Gastrocnemius medialis (tissue), 4 donors: ENCODE measurements at regions of chr10 and their contacts with region 1.

Region 1: GRCh38 chr10:77144656-77145055 is 493.0 kb downstream of the KCNMA1 start:
- DNase-seq: no peak
- ATAC-seq: no peak
- H3K4me3 ChIP-seq: no peak overlapping the region
- H3K27ac ChIP-seq: no peak overlapping the region
- H3K4me1 ChIP-seq: peaks cover 11 to 14% of the 10 kb centered on the region in 2 donors
- H3K27me3 ChIP-seq: no peaks in the 10 kb centered on the region
- CTCF ChIP-seq: no peak
- POLR2A ChIP-seq: no peak

Region 2: DNA sequence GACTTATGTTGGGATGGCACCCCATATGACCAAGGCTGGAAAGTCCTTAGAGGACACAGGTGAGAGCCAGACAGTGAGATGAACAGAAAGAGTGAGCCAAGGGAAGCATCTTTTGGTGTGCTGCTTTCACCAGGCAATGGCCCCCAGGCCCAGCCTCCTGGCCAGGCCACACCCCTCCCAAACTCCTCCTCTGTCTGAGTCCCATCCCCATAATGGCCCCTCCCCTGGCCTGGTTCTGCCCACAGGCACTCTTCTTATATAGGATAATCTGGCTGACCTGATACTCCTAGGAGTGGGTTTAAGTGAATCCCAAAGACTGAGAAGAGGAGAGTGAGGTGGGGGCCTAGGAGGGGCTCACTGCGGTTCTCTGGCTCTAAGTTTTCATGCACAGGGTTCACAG is 1141.5 kb after region 1 on chr10:
- in situ Hi-C with region 1: no loop called
- intact Hi-C with region 1: loop called (anchors 5 kb)
- DNase-seq: no peak
- ATAC-seq: no peak
- H3K4me3 ChIP-seq: no peak overlapping the region
- H3K27ac ChIP-seq: no peak overlapping the region
- H3K4me1 ChIP-seq: no peaks in the 10 kb centered on the region
- H3K27me3 ChIP-seq: no peaks in the 10 kb centered on the region
- CTCF ChIP-seq: no peak
- POLR2A ChIP-seq: no peak